Activated CD4-positive, alpha-beta T cell treated with anti-CD3 and anti-CD28 coated beads for 36 hours (primary cell): ENCODE measurements at regions of chr2 and their contacts with region 1.

Region 1: DNA sequence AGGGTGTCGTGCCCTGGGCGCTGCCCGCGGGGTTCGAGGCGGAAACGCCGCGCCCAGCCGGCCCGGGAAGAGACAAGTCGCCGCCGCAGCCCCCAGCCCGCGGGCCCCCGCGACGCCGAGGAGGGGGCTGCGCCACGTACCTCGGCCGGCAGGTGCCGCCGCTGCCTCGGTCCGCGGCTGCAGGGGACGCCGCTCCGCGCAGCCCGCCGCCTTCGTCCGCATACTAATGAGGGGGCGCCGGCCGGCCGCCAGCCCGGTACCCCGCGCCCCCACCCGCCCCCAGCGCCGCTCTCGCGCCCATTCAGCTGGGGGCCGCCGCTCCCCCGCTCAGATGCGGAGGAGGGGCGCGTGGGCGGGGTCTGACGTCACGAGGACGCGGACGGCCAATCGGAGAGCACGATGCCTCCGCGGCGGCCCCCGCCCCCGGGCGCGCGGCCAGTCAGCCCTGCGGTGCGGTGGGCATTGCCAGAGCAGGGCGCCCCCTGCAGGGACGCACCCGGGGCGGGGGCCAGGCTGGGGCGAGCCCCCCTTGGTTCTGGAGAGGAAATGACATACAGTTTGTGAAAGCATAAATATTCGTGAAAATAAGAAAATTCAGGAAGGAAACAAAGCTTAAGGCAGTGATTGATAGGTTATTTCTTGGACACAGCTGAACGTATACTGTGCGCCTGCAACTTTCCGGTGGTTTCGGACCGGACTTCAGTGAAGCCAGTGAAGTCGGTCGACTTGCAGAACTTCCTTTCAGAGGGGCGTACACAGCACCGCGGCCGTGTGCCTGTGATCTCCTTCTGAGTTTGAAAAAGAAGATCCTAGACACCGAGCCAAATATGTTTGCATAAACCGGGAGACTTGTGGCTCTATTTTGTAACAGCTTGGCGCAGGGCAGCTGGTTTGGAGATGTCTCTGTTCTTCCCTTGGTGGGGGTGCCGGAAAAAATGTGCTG is at the start of gene ST3GAL5:
- DNase-seq: peak; percentile 92
- ATAC-seq: peak; percentile 78
- H3K4me3 Mint-ChIP-seq: peak within 1 kb of the TSS; percentile 75
- H3K27ac Mint-ChIP-seq: peak within 1 kb of the TSS; percentile 75
- H3K4me1 Mint-ChIP-seq: peaks cover 46% of the 10 kb centered on the region
- H3K27me3 Mint-ChIP-seq: no peaks in the 10 kb centered on the region
- total RNA-seq, gene ST3GAL5: 6.2 to 7.3 TPM

Region 2: DNA sequence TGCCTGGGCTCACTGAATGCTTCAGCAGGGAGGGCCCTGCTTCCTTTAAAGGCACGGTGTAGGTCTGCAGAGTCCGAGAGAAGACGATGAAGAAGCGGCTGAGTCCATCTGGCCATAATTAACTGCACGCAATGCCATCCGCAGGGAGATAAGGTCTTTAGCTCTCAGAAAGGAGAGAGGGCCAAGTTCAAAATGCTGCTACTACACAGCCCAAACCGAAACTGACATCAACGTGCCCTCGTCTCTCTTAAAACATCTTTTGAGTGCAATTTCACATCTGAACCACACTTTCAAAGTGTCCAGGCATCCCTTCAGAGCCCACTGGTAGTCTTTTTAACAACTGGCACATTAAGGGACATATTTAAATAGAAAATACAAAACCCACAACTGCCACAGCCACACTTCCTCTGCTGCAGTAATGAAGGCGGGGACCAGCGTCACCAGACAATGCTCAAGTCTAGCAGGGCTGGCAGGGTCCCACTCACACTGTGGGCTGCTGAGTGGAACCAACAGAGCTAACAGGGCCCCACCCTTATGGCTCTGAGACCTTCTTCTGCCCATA is 35.9 kb before region 1 on chr2:
- CTCF ChIA-PET with region 1: interaction called, 12 read pairs
- POLR2A ChIA-PET with region 1: no interaction called
- intact Hi-C with region 1: loop called (anchors 1 to 5 kb)
- DNase-seq: peak; percentile 73
- ATAC-seq: peak; percentile 79
- H3K4me3 Mint-ChIP-seq: peak overlapping the region; percentile 71
- H3K27ac Mint-ChIP-seq: peak overlapping the region; percentile 99
- H3K4me1 Mint-ChIP-seq: peaks cover 51% of the 10 kb centered on the region
- H3K27me3 Mint-ChIP-seq: no peaks in the 10 kb centered on the region

Region 3: GRCh38 chr2:85900366-85900765 is 11.4 kb after region 1 on chr2:
- CTCF ChIA-PET with region 1: interaction called, 13 read pairs
- POLR2A ChIA-PET with region 1: no interaction called
- intact Hi-C with region 1: no loop called
- DNase-seq: no peak
- ATAC-seq: no peak
- H3K4me3 Mint-ChIP-seq: no peak overlapping the region
- H3K27ac Mint-ChIP-seq: no peak overlapping the region
- H3K4me1 Mint-ChIP-seq: peaks cover 10% of the 10 kb centered on the region
- H3K27me3 Mint-ChIP-seq: no peaks in the 10 kb centered on the region

Region 4: GRCh38 chr2:86079981-86080911 is 191.3 kb after region 1 on chr2:
- CTCF ChIA-PET with region 1: interaction called, 6 read pairs
- POLR2A ChIA-PET with region 1: interaction called, 5 read pairs
- intact Hi-C with region 1: loop called (anchors 2 kb)
- DNase-seq: peak; percentile 91
- ATAC-seq: peak; percentile 88
- H3K4me3 Mint-ChIP-seq: no peak overlapping the region
- H3K27ac Mint-ChIP-seq: peak overlapping the region; percentile 35
- H3K4me1 Mint-ChIP-seq: peaks cover 17% of the 10 kb centered on the region
- H3K27me3 Mint-ChIP-seq: no peaks in the 10 kb centered on the region

Region 5: DNA sequence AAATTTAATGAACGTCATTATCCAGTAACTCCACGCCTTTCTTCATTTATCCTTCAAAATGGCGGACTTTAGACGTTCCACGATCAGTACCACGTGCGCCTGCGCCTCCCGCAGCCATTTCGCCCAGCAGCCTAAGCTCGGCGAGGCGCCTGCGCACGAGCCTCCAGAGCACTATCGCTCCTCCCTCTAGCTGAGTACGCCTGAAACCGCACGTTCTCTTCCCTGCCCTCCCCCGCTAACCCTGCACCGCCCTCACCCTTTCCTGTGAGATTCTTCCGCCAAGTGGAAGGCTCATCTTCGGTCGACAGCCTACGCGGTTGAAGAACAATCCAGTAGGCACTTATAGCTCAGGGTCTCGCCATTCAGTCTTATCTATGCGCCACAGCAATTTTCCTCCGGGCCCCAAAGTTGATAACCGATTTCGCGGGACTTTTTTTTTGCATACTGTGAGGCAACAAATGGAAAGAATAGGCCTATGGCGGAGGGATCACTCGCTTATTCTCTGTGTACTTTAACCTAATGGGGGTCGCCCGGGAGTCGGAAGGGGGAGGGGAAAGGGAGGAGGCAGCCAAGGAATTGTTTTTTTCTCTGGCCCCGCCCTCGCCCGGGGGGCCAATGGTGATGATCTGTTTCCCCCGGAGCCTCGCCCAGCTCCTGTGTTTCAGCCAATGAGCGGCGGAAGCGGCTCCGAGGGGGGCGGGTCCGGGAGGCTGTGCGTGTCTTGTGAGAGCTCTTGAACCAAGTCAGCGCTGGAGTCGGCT is 551.9 kb after region 1 on chr2 and contains the start of gene KDM3A:
- CTCF ChIA-PET with region 1: no interaction called
- POLR2A ChIA-PET with region 1: no interaction called
- intact Hi-C with region 1: loop called in 1 of 2 experiments (anchors 5 kb)
- DNase-seq: peak; percentile 100
- ATAC-seq: peak; percentile 88
- H3K4me3 Mint-ChIP-seq: peak within 1 kb of the TSS; percentile 90
- H3K27ac Mint-ChIP-seq: peak within 1 kb of the TSS; percentile 99
- H3K4me1 Mint-ChIP-seq: peaks cover 37% of the 10 kb centered on the region
- H3K27me3 Mint-ChIP-seq: no peaks in the 10 kb centered on the region
- total RNA-seq, gene KDM3A: 68.9 to 82.9 TPM